ENCODE measurements at regions of chr17 and their contacts with region 1.

Region 1: DNA sequence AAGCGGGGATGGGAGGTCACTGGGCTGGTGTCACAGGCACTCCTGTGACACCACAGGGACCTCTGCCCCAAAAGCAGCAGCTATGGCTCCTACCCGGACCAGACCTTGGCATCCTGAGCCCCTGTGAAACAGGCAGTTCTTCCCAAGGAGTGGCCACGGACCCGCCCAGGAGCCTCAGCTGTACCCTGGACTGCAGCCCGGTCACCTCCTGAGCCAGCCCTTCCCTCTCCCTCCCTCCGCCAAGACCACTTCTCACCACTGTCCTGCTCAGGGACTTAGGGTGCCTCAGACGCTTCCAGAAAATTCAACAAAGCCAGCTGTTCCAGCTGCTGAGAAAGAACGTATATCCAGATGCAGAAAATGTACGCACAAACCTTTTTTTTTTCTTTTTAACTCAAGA is 13.9 kb upstream of the NCBP3 start:
- DNase-seq: no peak
- ATAC-seq: no peak
- H3K4me3 ChIP-seq: no peak overlapping the region
- H3K4me3 Mint-ChIP-seq: no peak overlapping the region
- H3K27ac ChIP-seq: no peak overlapping the region
- H3K27ac Mint-ChIP-seq: no peak overlapping the region
- H3K4me1 ChIP-seq: no peaks in the 10 kb centered on the region
- H3K4me1 Mint-ChIP-seq: no peaks in the 10 kb centered on the region
- H3K27me3 ChIP-seq: no peaks in the 10 kb centered on the region
- H3K27me3 Mint-ChIP-seq: no peaks in the 10 kb centered on the region

Region 2: GRCh38 chr17:3818786-3819185 is 41.2 kb before region 1 on chr17:
- CTCF ChIA-PET with region 1: no interaction called
- POLR2A ChIA-PET with region 1: no interaction called
- intact Hi-C with region 1: no loop called
- DNase-seq: no peak
- ATAC-seq: no peak
- H3K4me3 ChIP-seq: no peak overlapping the region
- H3K4me3 Mint-ChIP-seq: no peak overlapping the region
- H3K27ac ChIP-seq: no peak overlapping the region
- H3K27ac Mint-ChIP-seq: peak overlapping the region in 2 of 9 donors; percentile 9 to 58
- H3K4me1 ChIP-seq: no peaks in the 10 kb centered on the region
- H3K4me1 Mint-ChIP-seq: peaks cover 0 to 5% (median 0%) of the 10 kb centered on the region in 7 donors
- H3K27me3 ChIP-seq: no peaks in the 10 kb centered on the region
- H3K27me3 Mint-ChIP-seq: no peaks in the 10 kb centered on the region

Region 3: DNA sequence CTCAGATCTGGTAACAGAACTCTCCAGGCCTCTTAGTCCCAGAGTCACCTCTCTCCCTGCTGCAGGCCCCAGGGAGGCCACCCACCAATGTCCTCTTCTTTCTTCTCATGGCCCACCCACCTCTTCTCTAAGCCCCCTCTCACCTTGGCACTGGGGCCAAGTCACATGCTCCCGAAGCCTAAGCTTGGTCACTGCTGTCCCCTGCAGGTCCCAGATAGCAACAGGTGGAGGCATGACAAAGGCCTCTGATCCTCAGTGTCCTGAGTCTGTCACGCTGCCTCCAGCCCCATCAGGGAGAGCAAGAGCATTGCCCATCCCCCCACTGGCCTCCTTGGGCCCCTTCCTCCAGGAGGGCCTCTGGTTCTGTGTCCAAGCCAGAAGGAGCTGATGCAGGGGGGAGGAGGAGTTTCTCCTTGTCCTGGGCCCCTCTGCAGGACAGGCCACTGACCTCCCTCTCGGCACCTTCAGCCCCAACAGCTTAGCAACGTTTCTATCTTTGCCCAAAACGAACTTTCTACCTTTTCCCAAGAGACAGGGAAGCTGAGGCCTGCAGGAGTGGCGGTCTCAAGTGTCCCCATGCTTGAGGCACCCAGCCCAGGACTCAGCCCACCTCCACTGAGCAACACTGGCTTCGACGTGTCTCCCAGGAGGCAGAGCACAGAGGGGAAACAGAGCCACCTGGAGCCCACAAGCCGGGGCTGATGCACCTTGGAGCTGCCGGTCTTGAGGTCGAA is 47.7 kb after region 1 on chr17:
- CTCF ChIA-PET with region 1: no interaction called
- POLR2A ChIA-PET with region 1: no interaction called
- intact Hi-C with region 1: loop called (anchors 1 to 5 kb)
- DNase-seq: no peak
- ATAC-seq: no peak
- H3K4me3 ChIP-seq: no peak overlapping the region
- H3K4me3 Mint-ChIP-seq: no peak overlapping the region
- H3K27ac ChIP-seq: no peak overlapping the region
- H3K27ac Mint-ChIP-seq: peak overlapping the region in 3 of 9 donors; percentile 56 to 84 (median 66)
- H3K4me1 ChIP-seq: peaks cover 4 to 7% of the 10 kb centered on the region in 2 donors
- H3K4me1 Mint-ChIP-seq: peaks cover 10 to 24% (median 17%) of the 10 kb centered on the region in 7 donors
- H3K27me3 ChIP-seq: no peaks in the 10 kb centered on the region
- H3K27me3 Mint-ChIP-seq: no peaks in the 10 kb centered on the region

Region 4: DNA sequence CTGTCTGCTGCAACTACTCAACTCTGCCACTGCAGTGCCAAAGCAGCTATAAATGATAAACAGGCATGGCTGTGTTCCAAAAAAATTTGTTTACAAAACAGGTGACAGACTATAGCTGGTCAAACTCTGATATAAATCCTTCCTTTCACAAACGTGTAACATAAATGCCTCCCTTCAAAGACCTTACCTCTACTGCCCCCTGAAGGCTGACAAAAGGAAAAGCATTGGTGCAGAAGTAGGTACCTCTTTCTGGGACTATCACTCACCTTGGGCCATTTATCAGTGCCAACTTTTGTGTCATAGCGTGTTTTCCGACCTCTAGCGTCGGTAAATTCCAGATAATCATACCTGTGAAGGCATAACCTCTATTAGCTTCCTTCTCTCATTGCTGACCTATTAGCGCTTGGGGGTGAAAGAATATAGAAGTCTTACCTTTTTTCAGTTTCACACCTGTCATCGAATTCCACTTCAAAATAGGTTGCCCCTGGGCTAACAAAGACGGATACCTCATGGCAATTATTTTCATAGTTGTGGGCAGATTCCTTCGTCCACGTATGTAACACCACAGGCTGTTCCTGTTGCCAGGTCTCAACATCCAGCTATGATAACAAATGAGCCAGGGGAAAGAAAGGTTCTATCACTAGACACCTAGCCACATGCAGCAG is 215.0 kb after region 1 on chr17:
- CTCF ChIA-PET with region 1: interaction called, 5 read pairs
- POLR2A ChIA-PET with region 1: no interaction called
- intact Hi-C with region 1: loop called (anchors 1 to 5 kb)
- DNase-seq: peak in 7 of 9 donors; percentile 9 to 56 (median 42)
- ATAC-seq: peak; percentile 75
- H3K4me3 ChIP-seq: no peak overlapping the region
- H3K4me3 Mint-ChIP-seq: no peak overlapping the region
- H3K27ac ChIP-seq: no peak overlapping the region
- H3K27ac Mint-ChIP-seq: peak overlapping the region in 2 of 9 donors; percentile 39 to 41
- H3K4me1 ChIP-seq: no peaks in the 10 kb centered on the region
- H3K4me1 Mint-ChIP-seq: no peaks in the 10 kb centered on the region
- H3K27me3 ChIP-seq: no peaks in the 10 kb centered on the region
- H3K27me3 Mint-ChIP-seq: no peaks in the 10 kb centered on the region

Region 5: GRCh38 chr17:4565209-4566141 is 705.5 kb after region 1 on chr17:
- CTCF ChIA-PET with region 1: no interaction called
- POLR2A ChIA-PET with region 1: no interaction called
- intact Hi-C with region 1: no loop called
- DNase-seq: peak in 8 of 9 donors; percentile 29 to 60 (median 50)
- ATAC-seq: peak; percentile 90
- H3K4me3 ChIP-seq: no peak overlapping the region
- H3K4me3 Mint-ChIP-seq: peak overlapping the region in 9 of 10 donors; percentile 44 to 77 (median 70)
- H3K27ac ChIP-seq: no peak overlapping the region
- H3K27ac Mint-ChIP-seq: peak overlapping the region in 3 of 9 donors; percentile 15 to 41 (median 21)
- H3K4me1 ChIP-seq: peaks cover 7 to 11% of the 10 kb centered on the region in 2 donors
- H3K4me1 Mint-ChIP-seq: peaks cover 15 to 40% (median 33%) of the 10 kb centered on the region in 7 donors
- H3K27me3 ChIP-seq: no peaks in the 10 kb centered on the region
- H3K27me3 Mint-ChIP-seq: peaks cover 0 to 17% (median 0%) of the 10 kb centered on the region in 5 donors